Right cardiac atrium (tissue), 5 donors: ENCODE measurements at regions of chr9 and their contacts with region 1.

Region 1: GRCh38 chr9:18238254-18238653 is 235.7 kb upstream of the ADAMTSL1 start:
- DNase-seq: no peak
- ATAC-seq: peak in 1 of 2 donors; percentile 85
- H3K4me3 ChIP-seq: no peak overlapping the region
- H3K27ac ChIP-seq: no peak overlapping the region
- H3K4me1 ChIP-seq: no peaks in the 10 kb centered on the region
- H3K27me3 ChIP-seq: no peaks in the 10 kb centered on the region

Region 2: GRCh38 chr9:17837965-17838364 is 400.3 kb before region 1 on chr9:
- intact Hi-C with region 1: no loop called
- DNase-seq: no peak
- ATAC-seq: no peak
- H3K4me3 ChIP-seq: no peak overlapping the region
- H3K27ac ChIP-seq: no peak overlapping the region
- H3K4me1 ChIP-seq: peaks cover 1% of the 10 kb centered on the region
- H3K27me3 ChIP-seq: no peaks in the 10 kb centered on the region

Region 3: DNA sequence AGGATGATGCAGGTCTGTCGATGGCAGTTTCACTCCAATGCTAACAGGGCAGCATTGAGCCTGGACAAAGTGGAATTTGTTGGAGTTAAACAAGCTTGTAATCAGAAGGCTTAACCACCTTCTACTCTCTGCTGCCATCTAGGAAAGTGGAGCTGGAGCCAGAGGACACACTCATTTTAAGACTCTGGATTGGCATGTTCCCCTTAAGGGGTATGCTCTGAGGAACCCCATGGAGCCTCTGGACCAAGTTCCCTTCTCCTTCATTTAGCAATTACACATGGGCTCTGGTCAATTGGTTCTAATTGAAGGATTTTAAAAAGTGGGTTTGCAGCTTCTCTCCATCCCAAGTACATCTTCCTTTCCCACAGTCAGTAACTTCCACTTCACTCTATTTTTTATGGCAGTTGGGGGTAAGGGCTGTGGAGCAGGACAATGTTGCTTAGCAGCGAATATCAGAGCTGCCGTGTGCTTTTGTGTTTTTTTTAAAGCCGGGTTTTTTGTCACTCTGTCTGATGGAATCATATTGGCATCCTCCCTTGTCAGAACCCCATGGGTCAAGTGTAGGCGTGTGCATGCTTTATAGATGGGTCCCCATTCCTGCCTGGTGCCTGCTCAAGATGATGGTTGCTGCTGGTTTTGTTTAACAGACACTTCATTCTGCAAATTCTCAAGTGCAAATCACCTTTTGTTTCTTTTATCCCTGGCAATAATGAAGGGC is 95.1 kb before region 1 on chr9:
- intact Hi-C with region 1: no loop called
- DNase-seq: no peak
- ATAC-seq: no peak
- H3K4me3 ChIP-seq: no peak overlapping the region
- H3K27ac ChIP-seq: no peak overlapping the region
- H3K4me1 ChIP-seq: no peaks in the 10 kb centered on the region
- H3K27me3 ChIP-seq: no peaks in the 10 kb centered on the region

Region 4: GRCh38 chr9:18189871-18190670 is 48.2 kb before region 1 on chr9:
- intact Hi-C with region 1: loop called in 1 of 4 experiments (anchors 10 kb)
- DNase-seq: no peak
- ATAC-seq: peak in 1 of 2 donors; percentile 64
- H3K4me3 ChIP-seq: no peak overlapping the region
- H3K27ac ChIP-seq: no peak overlapping the region
- H3K4me1 ChIP-seq: no peaks in the 10 kb centered on the region
- H3K27me3 ChIP-seq: no peaks in the 10 kb centered on the region